Gastrocnemius medialis (tissue), 4 donors: ENCODE measurements at regions of chr20 and their contacts with region 1.

Region 1: GRCh38 chr20:49534255-49534712 is 33.7 kb downstream of the PTGIS start:
- DNase-seq: peak in 1 of 2 donors; percentile 47
- ATAC-seq: peak; percentile 60 to 69
- H3K4me3 ChIP-seq: no peak overlapping the region
- H3K27ac ChIP-seq: no peak overlapping the region
- H3K4me1 ChIP-seq: no peaks in the 10 kb centered on the region
- H3K27me3 ChIP-seq: no peaks in the 10 kb centered on the region
- CTCF ChIP-seq: peak; percentile 82 to 87 (median 84)
- POLR2A ChIP-seq: no peak

Region 2: DNA sequence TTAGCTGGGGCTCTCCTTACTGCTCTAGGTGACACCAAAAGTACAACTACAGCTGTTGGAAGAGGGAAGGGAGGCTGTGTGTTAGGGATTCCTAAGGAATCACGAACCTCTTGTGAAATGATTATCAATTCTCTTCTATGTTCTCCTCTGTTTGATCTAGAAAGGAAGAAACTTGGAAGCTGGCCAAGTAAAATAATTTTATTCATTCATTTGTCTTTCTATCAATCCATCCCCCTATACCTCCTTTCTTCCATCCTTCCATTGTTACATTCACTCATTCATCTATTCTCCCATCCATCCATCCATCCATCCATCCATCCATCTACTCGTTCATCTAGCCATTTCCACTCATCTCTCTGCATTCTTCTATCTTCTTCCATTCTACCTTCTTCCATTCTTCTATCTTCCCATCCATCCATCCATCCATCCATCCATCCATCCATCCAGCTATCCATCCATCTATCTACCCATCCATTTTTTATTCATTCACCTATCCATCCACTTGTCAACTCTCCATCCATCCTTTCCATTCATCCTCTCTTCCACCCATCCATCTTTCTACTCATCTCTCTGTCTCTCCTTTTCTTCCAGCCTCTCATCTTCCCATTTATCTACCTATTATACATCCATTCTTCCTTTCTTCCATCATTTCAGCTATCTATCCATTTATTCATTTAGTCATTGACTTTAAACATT is 203.6 kb before region 1 on chr20:
- in situ Hi-C with region 1: loop called (anchors 5 to 10 kb)
- intact Hi-C with region 1: loop called (anchors 1 kb)
- DNase-seq: no peak
- ATAC-seq: no peak
- H3K4me3 ChIP-seq: no peak overlapping the region
- H3K27ac ChIP-seq: no peak overlapping the region
- H3K4me1 ChIP-seq: no peaks in the 10 kb centered on the region
- H3K27me3 ChIP-seq: peaks cover 0 to 13% (median 13%) of the 10 kb centered on the region in 3 donors
- CTCF ChIP-seq: no peak
- POLR2A ChIP-seq: no peak

Region 3: DNA sequence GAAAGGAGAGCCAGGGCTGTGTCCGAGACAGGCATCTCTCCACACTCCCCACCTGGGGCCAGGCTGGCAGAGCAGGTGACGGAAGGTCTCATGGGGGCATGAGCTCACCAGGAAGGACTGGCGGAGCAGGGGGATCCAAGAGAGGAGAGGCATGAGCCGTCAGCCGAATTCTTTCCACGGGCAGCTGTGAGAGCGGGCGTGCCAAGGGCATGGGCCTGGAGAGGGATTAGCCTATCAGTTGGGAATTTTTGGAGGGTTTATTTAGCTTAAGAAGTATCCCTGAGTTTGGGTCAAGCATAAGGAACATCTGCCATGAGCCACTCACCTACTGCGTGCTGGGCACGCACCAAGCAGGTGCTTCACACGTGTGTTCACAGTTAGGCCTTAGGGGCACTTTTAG is 196.2 kb before region 1 on chr20:
- in situ Hi-C with region 1: loop called (anchors 5 to 10 kb)
- intact Hi-C with region 1: loop called (anchors 1 kb)
- DNase-seq: no peak
- ATAC-seq: no peak
- H3K4me3 ChIP-seq: no peak overlapping the region
- H3K27ac ChIP-seq: peak overlapping the region in 3 of 4 donors; percentile 29 to 68 (median 63)
- H3K4me1 ChIP-seq: peaks cover 10 to 24% of the 10 kb centered on the region in 2 donors
- H3K27me3 ChIP-seq: no peaks in the 10 kb centered on the region
- CTCF ChIP-seq: no peak
- POLR2A ChIP-seq: no peak

Region 4: DNA sequence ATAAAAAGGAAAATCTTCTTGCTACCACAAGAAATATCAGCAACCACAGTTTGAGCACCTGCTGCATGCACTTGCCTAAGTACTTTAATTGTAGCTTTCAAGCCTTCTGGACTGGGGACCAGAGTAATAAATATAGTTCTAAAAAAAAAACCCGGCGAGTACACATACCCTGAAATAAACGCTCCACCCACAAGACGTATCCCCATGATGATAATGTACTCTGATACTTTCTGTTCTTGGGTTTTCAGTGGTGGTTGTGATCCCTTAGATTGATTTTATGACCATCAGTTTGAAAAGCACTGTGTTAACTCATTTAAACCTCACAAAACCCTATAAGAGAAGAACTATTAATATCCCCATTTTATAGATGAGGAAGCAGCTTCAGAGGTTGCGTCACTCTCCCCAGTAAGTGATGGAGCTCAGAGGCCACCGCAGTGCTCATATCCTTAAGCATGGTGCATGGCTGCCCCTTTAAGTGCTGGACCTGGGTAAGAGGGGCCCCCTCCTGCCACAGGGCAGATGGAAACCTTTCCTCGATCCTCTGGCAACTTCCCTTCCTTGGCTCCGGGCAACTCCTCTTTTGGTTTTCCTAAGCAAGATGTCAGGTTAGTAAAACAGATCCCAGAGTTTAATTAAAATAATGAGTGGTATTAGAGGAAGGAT is 119.1 kb before region 1 on chr20:
- in situ Hi-C with region 1: no loop called
- intact Hi-C with region 1: loop called (anchors 5 kb)
- DNase-seq: no peak
- ATAC-seq: peak in 1 of 2 donors; percentile 83
- H3K4me3 ChIP-seq: no peak overlapping the region
- H3K27ac ChIP-seq: peak overlapping the region; percentile 60 to 83 (median 71)
- H3K4me1 ChIP-seq: peaks cover 75 to 84% of the 10 kb centered on the region in 2 donors
- H3K27me3 ChIP-seq: no peaks in the 10 kb centered on the region
- CTCF ChIP-seq: no peak
- POLR2A ChIP-seq: peak in 1 of 2 donors; percentile 6

Region 5: GRCh38 chr20:49484180-49485140 is 49.8 kb before region 1 on chr20:
- in situ Hi-C with region 1: no loop called
- intact Hi-C with region 1: loop called (anchors 1 kb)
- DNase-seq: peak; percentile 64 to 73
- ATAC-seq: peak; percentile 82 to 86
- H3K4me3 ChIP-seq: peak overlapping the region; percentile 51 to 65 (median 63)
- H3K27ac ChIP-seq: peak overlapping the region in 1 of 4 donors; percentile 44
- H3K4me1 ChIP-seq: peaks cover 5 to 37% of the 10 kb centered on the region in 2 donors
- H3K27me3 ChIP-seq: no peaks in the 10 kb centered on the region
- CTCF ChIP-seq: peak; percentile 77 to 91 (median 85)
- POLR2A ChIP-seq: no peak

Region 6: GRCh38 chr20:49508435-49509199 is 25.7 kb before region 1 on chr20:
- in situ Hi-C with region 1: no loop called
- intact Hi-C with region 1: loop called (anchors 2 kb)
- DNase-seq: no peak
- ATAC-seq: peak; percentile 33 to 51
- H3K4me3 ChIP-seq: peak overlapping the region in 1 of 4 donors; percentile 21
- H3K27ac ChIP-seq: peak overlapping the region; percentile 4 to 82 (median 77)
- H3K4me1 ChIP-seq: peaks cover 34 to 41% of the 10 kb centered on the region in 2 donors
- H3K27me3 ChIP-seq: no peaks in the 10 kb centered on the region
- CTCF ChIP-seq: peak; percentile 44 to 66 (median 53)
- POLR2A ChIP-seq: no peak